Activated CD8-positive, alpha-beta T cell treated with anti-CD3 and anti-CD28 coated beads, Interleukin-2, amount 10 ng/mL, durations not matched to agents 7 days and 5 days (primary cell): ENCODE measurements at regions of chr2 and their contacts with region 1.

Region 1: DNA sequence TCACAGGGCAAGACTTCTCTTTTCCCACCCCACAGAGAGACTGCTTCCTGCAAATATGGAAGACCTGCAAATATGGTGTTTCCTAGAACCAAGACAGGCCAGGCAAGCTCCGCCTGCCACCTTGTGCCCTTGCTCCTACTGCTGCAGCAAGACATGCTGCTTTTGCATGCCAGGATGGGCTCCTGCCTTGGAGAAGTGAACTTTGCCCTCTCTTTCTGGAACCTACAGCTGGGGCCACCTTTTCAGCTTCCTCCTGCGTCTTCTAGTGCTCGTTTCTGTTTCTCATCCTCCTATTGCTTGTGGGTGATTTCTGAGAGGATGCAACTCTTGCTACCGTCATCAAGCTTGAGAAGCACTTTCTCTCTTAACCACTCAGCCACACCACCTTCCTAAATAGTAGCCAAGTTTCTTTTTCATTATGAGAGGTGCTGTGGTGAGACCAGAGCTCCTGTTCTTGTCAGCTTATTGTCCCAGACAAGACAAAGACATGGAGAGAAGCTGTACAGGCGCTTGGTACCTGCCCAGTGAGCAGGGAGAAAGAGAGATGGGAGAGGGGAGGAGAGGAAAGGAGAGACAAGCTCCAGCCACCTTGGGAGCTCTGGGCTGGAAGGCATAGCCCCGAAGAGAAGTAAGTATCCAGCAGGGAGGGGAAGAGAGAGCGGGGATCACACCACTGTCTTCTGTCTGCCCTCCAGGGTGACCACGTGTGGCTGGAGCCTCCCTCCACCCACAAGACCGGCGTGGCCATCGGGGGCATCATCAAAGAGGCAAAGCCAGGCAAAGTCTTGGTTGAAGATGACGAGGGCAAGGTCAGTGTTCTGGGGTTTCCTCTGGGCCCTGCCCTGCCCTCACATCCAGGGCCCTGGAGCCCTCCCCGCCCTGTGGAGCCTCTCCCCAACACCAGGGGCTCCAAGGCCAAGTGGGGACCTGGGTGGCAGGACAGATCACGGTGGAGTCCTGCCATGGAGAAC is 28.3 kb downstream of the MYO7B start:
- DNase-seq: peak; percentile 71
- ATAC-seq: peak; percentile 89
- H3K4me3 Mint-ChIP-seq: peak overlapping the region; percentile 40
- H3K27ac Mint-ChIP-seq: peak overlapping the region; percentile 88
- H3K4me1 Mint-ChIP-seq: peaks cover 23% of the 10 kb centered on the region
- H3K27me3 Mint-ChIP-seq: peaks cover 16% of the 10 kb centered on the region

Region 2: DNA sequence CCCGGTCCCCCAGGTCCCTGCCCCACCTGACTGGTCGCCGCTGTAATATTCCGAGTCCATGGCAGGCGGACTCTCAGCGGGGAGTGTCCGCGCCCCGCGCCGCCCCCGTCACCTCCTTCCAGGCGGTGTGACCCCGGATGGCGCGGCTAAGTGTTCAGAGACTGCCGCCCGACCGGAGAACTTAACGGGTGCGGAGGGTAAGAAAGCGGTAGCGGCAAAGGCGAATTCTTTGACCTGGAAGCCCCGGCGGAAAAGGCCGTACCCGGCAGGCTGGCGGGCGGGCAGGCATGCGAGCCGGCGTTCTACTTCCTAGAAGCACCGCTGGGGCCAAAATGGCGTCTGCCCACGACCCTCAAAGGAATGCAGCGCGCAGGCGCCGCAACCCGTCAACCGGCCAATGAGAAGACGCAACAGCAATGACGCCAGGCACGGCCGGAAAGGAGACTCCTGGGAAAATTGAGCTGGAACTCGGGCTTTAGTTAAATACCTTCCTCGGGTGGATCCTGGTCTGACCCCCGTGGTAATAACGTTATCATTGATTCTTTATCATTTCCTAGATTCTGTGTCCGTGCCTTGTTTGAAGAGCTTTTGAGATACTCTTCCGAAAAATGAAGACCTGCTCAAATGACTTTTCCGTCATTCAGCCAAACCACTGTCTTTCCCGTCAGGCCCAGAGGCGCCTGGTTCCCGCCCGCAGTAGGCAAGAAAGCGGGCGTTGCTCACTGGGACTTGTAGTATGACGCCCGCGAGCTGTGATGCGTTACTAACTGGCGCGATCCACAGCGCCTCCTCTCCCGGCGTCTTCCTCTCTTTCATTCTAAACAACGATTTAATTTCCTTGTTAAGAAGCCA is 37.4 kb before region 1 on chr2 and contains the start of gene IWS1:
- CTCF ChIA-PET with region 1: interaction called, 8 read pairs
- POLR2A ChIA-PET with region 1: interaction called, 16 read pairs
- DNase-seq: peak; percentile 96
- ATAC-seq: peak; percentile 91
- H3K4me3 Mint-ChIP-seq: peak within 1 kb of the TSS; percentile 95
- H3K27ac Mint-ChIP-seq: peak within 1 kb of the TSS; percentile 96
- H3K4me1 Mint-ChIP-seq: peaks cover 26% of the 10 kb centered on the region
- H3K27me3 Mint-ChIP-seq: peaks cover 7% of the 10 kb centered on the region
- total RNA-seq, gene IWS1: 48.4 to 53.3 TPM

Region 3: GRCh38 chr2:127576433-127577207 is 12.9 kb after region 1 on chr2:
- CTCF ChIA-PET with region 1: interaction called, 10 read pairs
- POLR2A ChIA-PET with region 1: interaction called, 3 read pairs
- DNase-seq: no peak
- ATAC-seq: no peak
- H3K4me3 Mint-ChIP-seq: no peak overlapping the region
- H3K27ac Mint-ChIP-seq: peak overlapping the region; percentile 66
- H3K4me1 Mint-ChIP-seq: peaks cover 32% of the 10 kb centered on the region
- H3K27me3 Mint-ChIP-seq: peaks cover 7% of the 10 kb centered on the region